Pancreas (tissue), 10 donors: ENCODE measurements at regions of chr6 and their contacts with region 1.

Region 1: GRCh38 chr6:5143634-5144311 is 58.6 kb downstream of the PPP1R3G start:
- DNase-seq: peak; percentile 48 to 93 (median 82)
- ATAC-seq: peak; percentile 67 to 94 (median 93)
- H3K4me3 ChIP-seq: no peak overlapping the region
- H3K27ac ChIP-seq: no peak overlapping the region
- H3K4me1 ChIP-seq: no peaks in the 10 kb centered on the region
- H3K27me3 ChIP-seq: no peaks in the 10 kb centered on the region
- CTCF ChIP-seq: peak; percentile 62 to 81 (median 70)

Region 2: GRCh38 chr6:4805553-4806336 is 338.0 kb before region 1 on chr6:
- intact Hi-C with region 1: no loop called
- DNase-seq: peak; percentile 19 to 74 (median 44)
- ATAC-seq: peak; percentile 63 to 87 (median 83)
- H3K4me3 ChIP-seq: no peak overlapping the region
- H3K27ac ChIP-seq: no peak overlapping the region
- H3K4me1 ChIP-seq: no peaks in the 10 kb centered on the region
- H3K27me3 ChIP-seq: no peaks in the 10 kb centered on the region
- CTCF ChIP-seq: peak; percentile 12 to 52 (median 34)

Region 3: GRCh38 chr6:5181506-5182287 is 37.9 kb after region 1 on chr6:
- intact Hi-C with region 1: no loop called
- DNase-seq: no peak
- ATAC-seq: no peak
- H3K4me3 ChIP-seq: no peak overlapping the region
- H3K27ac ChIP-seq: no peak overlapping the region
- H3K4me1 ChIP-seq: no peaks in the 10 kb centered on the region
- H3K27me3 ChIP-seq: no peaks in the 10 kb centered on the region
- CTCF ChIP-seq: no peak

Region 4: DNA sequence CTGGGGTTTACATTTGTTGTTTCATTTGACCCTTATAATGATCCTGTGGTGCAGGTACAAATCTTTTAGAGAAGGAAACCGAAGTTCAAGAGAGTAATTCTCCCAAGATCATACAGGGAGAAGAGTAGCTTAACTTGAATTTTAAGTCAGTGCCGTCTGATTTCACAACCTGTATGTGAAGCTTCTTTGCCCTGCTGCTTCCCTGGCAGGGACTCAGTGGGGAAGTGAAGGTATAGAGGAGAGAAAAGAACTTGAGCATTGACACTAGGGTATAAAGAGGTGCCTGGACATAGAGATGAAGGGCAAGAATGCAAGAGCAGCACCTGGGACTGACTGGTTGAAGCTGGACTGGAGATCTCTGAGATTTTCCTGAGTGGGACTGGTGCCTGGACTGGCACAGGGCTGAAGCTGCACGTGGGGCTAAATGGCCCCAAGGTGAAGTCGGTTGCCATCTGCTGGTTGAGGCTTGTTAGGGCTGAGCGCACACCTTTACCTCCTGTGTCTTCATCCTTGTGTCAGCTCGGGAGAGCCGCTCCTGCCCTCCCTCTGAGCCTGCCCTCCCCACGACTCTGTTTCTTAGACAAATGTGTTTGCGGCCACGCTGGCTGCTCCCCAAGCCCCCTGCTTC is 159.3 kb after region 1 on chr6:
- intact Hi-C with region 1: loop called in 1 of 3 experiments (anchors 10 kb)
- DNase-seq: peak; percentile 54 to 73 (median 66)
- ATAC-seq: peak; percentile 97 to 99 (median 98)
- H3K4me3 ChIP-seq: no peak overlapping the region
- H3K27ac ChIP-seq: no peak overlapping the region
- H3K4me1 ChIP-seq: no peaks in the 10 kb centered on the region
- H3K27me3 ChIP-seq: no peaks in the 10 kb centered on the region
- CTCF ChIP-seq: peak; percentile 29 to 55 (median 42)

Region 5: DNA sequence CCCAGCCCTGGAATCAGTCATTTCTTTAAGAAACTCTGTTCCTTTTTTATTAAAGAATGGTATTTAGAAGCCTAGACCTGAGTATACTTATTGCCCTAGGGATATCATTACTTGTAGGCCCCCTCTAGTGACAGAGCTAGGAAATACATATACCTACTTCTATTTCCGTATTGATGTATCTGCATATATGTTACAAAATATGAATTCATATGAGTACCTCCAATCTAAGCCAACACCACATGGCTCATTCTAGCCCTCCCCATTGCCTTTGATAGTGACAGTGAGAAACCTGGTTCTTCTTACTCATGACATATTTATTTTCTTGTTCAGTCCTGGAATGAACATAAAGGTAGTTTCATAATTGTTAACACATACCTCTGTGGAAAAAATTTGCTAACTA is 254.8 kb after region 1 on chr6:
- intact Hi-C with region 1: loop called in 1 of 3 experiments (anchors 10 kb)
- DNase-seq: no peak
- ATAC-seq: peak in 1 of 4 donors; percentile 49
- H3K4me3 ChIP-seq: no peak overlapping the region
- H3K27ac ChIP-seq: no peak overlapping the region
- H3K4me1 ChIP-seq: no peaks in the 10 kb centered on the region
- H3K27me3 ChIP-seq: no peaks in the 10 kb centered on the region
- CTCF ChIP-seq: no peak